Calu3 (cell line): ENCODE measurements at regions of chr5 and their contacts with region 1.

Region 1: DNA sequence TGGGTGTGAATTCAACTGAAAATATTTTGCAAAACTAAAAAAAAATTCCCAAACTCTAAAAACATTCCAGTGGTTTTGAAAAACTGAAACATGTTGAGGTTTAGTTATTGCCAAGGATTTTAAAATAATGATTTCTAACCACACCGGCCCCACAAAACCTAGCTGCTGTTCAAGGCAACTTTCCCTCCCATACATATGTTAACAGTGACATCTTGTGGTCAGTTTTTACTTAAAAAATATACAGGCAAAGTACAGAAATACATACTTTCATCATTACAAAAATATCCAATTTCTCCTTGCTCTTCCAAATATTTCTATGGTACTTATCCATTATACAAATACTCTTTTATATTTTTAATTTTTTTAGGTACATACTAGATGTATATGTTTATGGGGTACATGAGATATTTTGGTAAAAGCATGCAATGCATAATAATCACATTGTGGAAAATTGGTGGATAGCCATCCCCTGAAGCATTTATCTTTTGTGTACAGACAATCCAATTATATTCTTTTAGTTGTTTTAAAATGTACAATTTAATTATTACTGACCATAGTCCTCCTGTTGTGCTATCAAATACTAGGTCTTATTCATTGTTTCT is 34.4 kb upstream of the MRPS30 start:
- DNase-seq: no peak
- H3K4me3 Mint-ChIP-seq: no peak overlapping the region
- H3K27ac Mint-ChIP-seq: no peak overlapping the region
- H3K4me1 Mint-ChIP-seq: no peaks in the 10 kb centered on the region
- H3K27me3 Mint-ChIP-seq: no peaks in the 10 kb centered on the region
- CTCF ChIP-seq: peak; percentile 53

Region 2: DNA sequence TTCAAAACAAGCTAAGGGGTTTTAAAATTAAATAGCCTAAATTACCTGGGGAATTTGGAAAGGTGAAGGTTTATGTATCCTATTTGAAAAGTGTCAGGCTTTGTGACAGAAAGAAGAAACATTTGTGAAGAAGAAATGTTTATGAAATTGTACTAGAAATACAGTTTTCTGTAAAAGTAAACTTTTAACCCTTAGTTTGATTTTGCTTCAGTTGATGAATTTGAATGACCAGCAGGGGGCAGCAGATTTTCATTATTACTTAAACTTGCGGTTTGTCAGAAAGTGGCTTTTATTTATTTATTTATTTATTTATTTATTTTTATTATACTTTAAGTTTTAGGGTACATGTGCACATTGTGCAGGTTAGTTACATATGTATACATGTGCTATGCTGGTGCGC is 1113.3 kb before region 1 on chr5:
- CTCF ChIA-PET with region 1: no interaction called
- intact Hi-C with region 1: loop called (anchors 10 kb)
- DNase-seq: peak; percentile 41
- H3K4me3 Mint-ChIP-seq: no peak overlapping the region
- H3K27ac Mint-ChIP-seq: no peak overlapping the region
- H3K4me1 Mint-ChIP-seq: no peaks in the 10 kb centered on the region
- H3K27me3 Mint-ChIP-seq: no peaks in the 10 kb centered on the region
- CTCF ChIP-seq: no peak

Region 3: GRCh38 chr5:44099653-44100052 is 674.7 kb before region 1 on chr5:
- CTCF ChIA-PET with region 1: no interaction called
- intact Hi-C with region 1: no loop called
- DNase-seq: no peak
- H3K4me3 Mint-ChIP-seq: no peak overlapping the region
- H3K27ac Mint-ChIP-seq: no peak overlapping the region
- H3K4me1 Mint-ChIP-seq: no peaks in the 10 kb centered on the region
- H3K27me3 Mint-ChIP-seq: no peaks in the 10 kb centered on the region
- CTCF ChIP-seq: no peak